Heart left ventricle (tissue), 16 donors: ENCODE measurements at regions of chr16 and their contacts with region 1.

Region 1: GRCh38 chr16:23595951-23596720 is at the start of gene NDUFAB1:
- DNase-seq: peak; percentile 90 to 95 (median 93)
- ATAC-seq: peak; percentile 93 to 97 (median 96)
- H3K4me3 ChIP-seq: peak within 1 kb of the TSS; percentile 67 to 100 (median 93)
- H3K27ac ChIP-seq: peak within 1 kb of the TSS; percentile 82 to 97 (median 88)
- H3K4me1 ChIP-seq: peaks cover 2 to 47% (median 25%) of the 10 kb centered on the region in 12 donors
- H3K27me3 ChIP-seq: no peaks in the 10 kb centered on the region
- CTCF ChIP-seq: peak; percentile 99 to 100 (median 100)
- POLR2A ChIP-seq: peak in 1 of 2 donors; percentile 55
- total RNA-seq, gene NDUFAB1: 298 to 896 (median 409) TPM

Region 2: DNA sequence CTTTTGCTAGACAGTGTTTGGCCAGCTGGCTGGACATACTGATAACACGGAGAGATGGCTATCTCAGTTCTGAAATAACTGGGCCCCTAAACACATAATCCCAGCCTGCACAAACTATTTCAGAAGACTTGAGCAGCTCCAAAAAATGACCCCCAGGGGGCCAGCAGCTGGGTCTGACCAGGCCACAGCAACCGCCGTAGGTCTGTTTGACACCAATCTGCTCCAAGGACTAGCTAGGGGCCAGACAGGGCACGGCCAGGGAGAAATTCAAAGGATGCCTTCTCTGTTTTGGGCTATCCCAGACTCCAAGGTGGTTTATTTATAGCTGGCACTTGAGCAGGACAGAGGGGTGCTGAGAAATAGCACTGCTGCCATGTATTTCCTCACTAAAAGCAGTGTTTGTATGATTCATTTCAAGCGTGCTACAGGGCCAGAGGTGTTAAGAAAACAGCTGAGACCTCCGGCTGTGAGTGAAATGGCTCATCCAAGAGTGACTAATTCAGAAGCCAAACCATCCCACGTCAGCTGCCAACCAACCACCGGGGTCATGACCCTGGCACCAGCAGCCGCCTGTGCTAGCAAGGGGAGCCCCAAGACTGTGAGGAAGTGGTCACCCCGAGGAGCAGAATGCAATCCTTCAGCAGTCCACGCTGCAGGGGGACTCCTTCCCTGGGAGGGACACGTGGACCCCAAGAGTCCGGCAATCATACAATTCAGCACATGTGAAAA is 91.5 kb before region 1 on chr16:
- intact Hi-C with region 1: loop called in 1 of 10 experiments (anchors 5 kb)
- DNase-seq: peak in 3 of 5 donors; percentile 49 to 73 (median 68)
- ATAC-seq: peak in 3 of 4 donors; percentile 57 to 80 (median 70)
- H3K4me3 ChIP-seq: peak overlapping the region in 1 of 12 donors; percentile 8
- H3K27ac ChIP-seq: peak overlapping the region in 11 of 12 donors; percentile 32 to 82 (median 49)
- H3K4me1 ChIP-seq: peaks cover 4 to 96% (median 35%) of the 10 kb centered on the region in 12 donors
- H3K27me3 ChIP-seq: no peaks in the 10 kb centered on the region
- CTCF ChIP-seq: no peak
- POLR2A ChIP-seq: no peak

Region 3: DNA sequence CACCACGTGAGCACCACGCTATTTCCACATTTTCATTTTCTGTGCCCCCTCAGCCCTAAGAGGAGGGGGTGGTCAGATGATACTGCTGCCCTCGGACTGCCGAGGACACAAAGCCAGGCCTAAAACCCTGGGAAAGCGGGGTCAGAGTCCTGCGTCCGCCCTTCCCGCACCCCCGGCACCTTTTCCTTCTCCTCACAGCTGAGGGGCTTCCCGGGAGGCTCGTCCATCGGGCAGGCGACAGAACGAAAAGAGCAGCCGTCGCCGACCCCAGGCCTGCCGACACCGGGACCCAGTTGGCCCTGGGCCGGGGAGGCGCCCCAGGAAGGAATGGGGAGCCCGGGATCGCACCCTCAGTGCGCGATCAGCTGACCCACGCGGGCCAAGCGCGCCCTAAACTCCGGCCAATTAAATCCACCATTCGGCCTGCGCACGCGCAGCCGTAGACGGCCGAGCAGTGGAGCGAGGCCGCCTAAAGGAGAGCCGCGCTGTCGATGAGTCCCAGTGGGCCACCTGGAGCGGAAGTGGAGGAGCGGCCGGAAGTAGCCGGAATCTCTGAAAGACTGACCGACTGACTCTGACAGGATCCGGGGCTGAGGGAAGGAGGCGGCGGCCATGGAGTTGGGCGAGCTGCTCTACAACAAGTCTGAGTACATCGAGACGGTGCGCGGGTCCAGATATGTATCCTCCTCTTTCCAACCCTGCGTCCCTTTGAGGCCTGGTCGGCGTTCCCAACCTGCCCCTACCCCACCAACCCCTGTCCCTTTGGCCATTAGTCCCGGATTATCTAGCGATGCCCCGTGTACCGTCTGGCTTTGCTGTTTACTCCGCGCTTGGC is 45.0 kb after region 1 on chr16 and contains the starts of genes DCTN5 and PALB2:
- intact Hi-C with region 1: loop called in 1 of 10 experiments (anchors 2 kb)
- DNase-seq: peak; percentile 93 to 96 (median 96)
- ATAC-seq: peak; percentile 99 to 100 (median 100)
- H3K4me3 ChIP-seq: peak within 1 kb of the TSS; percentile 67 to 99 (median 88)
- H3K27ac ChIP-seq: peak within 1 kb of the TSS; percentile 64 to 89 (median 83)
- H3K4me1 ChIP-seq: peaks cover 0 to 31% (median 20%) of the 10 kb centered on the region in 12 donors
- H3K27me3 ChIP-seq: no peaks in the 10 kb centered on the region
- CTCF ChIP-seq: peak in 1 of 12 donors; percentile 12
- POLR2A ChIP-seq: peak in 1 of 2 donors; percentile 70
- total RNA-seq, gene DCTN5: 26.8 to 56.0 (median 40.5) TPM
- total RNA-seq, gene PALB2: 3.8 to 7.4 (median 4.5) TPM